ENCODE measurements at regions of chr10 and their contacts with region 1.

Region 1: DNA sequence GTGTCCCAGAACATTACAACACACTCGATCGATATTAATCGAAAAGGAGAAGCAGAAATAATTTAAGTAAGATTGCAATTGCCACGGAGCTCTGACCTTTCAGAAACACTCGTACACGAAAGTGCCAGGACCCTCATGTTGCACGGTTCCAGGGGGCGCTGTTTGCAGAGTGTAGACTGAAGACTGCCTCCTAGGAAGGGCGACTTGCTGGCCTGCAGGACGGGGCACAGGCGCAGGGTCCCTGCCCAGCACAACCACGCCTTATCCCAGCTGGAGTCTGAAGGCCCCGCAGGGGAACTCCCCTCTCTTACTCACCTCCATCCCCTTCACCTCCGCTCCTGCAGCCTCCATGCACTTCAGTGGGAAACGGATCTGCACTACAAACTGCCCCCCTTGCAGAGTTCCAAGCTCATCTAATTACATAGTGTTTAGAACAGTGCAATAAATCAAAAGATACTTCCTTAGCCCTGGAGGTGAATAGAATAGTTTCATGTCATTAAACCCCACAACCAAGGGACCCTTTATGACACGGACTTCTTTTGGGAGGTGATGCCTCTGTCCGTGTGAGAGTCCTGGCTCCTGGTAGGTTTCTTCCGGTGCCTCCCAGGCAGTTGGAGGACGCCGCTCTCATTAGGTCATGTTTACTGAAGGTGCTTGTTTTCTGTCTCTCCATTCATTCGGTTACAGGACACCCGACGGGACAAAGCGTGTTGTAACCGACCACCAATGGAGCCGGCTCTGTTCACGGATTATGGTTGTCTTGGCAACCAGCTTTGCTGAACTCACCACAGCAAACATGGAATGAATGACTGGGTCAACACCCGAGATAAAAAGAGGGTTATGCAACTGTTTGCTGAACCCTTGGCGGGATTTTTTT is 262.2 kb downstream of the BAMBI start:
- DNase-seq: peak; percentile 92 to 100
- ATAC-seq: peak; percentile 94 to 96
- H3K4me3 ChIP-seq: peak overlapping the region; percentile 35
- H3K27ac ChIP-seq: peak overlapping the region; percentile 85
- H3K4me1 ChIP-seq: peaks cover 35% of the 10 kb centered on the region
- CTCF ChIP-seq: peak; percentile 89
- EP300 ChIP-seq: peak; percentile 95 to 97
- POLR2A ChIP-seq: no peak
- RAD21 ChIP-seq: peak; percentile 64 to 68

Region 2: GRCh38 chr10:28676968-28677887 is 262.3 kb before region 1 on chr10 and contains the start of gene BAMBI:
- CTCF ChIA-PET with region 1: interaction called, 13 read pairs
- POLR2A ChIA-PET with region 1: interaction called, 7 read pairs
- DNase-seq: peak; percentile 49 to 90
- ATAC-seq: peak; percentile 94 to 97
- H3K4me3 ChIP-seq: peak within 1 kb of the TSS; percentile 99
- H3K27ac ChIP-seq: peak within 1 kb of the TSS; percentile 94
- H3K4me1 ChIP-seq: peaks cover 27% of the 10 kb centered on the region
- CTCF ChIP-seq: peak; percentile 87
- EP300 ChIP-seq: no peak
- POLR2A ChIP-seq: peak; percentile 99
- RAD21 ChIP-seq: peak; percentile 57 to 95
- polyA plus RNA-seq, gene BAMBI: 40.5 and 60.8 TPM in 2 replicates

Region 3: GRCh38 chr10:28839600-28840007 is 99.9 kb before region 1 on chr10:
- CTCF ChIA-PET with region 1: interaction called, 15 read pairs
- POLR2A ChIA-PET with region 1: no interaction called
- DNase-seq: peak in 1 of 2 experiments; percentile 69
- ATAC-seq: peak in 1 of 2 experiments; percentile 51; a peak in 3 of 6 replicates
- H3K4me3 ChIP-seq: no peak overlapping the region
- H3K27ac ChIP-seq: peak overlapping the region; percentile 36 to 55; a peak in 5 of 6 replicates
- H3K4me1 ChIP-seq: peaks cover 47% of the 10 kb centered on the region
- CTCF ChIP-seq: no peak
- EP300 ChIP-seq: no peak
- POLR2A ChIP-seq: no peak
- RAD21 ChIP-seq: no peak

Region 4: GRCh38 chr10:28925121-28925698 is 14.3 kb before region 1 on chr10:
- CTCF ChIA-PET with region 1: interaction called, 23 read pairs
- POLR2A ChIA-PET with region 1: interaction called, 5 read pairs
- DNase-seq: no peak
- ATAC-seq: no peak
- H3K4me3 ChIP-seq: no peak overlapping the region
- H3K27ac ChIP-seq: peak overlapping the region in 1 of 2 experiments; percentile 45; a peak in 2 of 6 replicates
- H3K4me1 ChIP-seq: peaks cover 20% of the 10 kb centered on the region
- CTCF ChIP-seq: no peak
- EP300 ChIP-seq: no peak
- POLR2A ChIP-seq: no peak
- RAD21 ChIP-seq: no peak

Region 5: GRCh38 chr10:28975891-28976531 is 36.5 kb after region 1 on chr10:
- CTCF ChIA-PET with region 1: interaction called, 10 read pairs
- POLR2A ChIA-PET with region 1: no interaction called
- DNase-seq: no peak
- ATAC-seq: no peak
- H3K4me3 ChIP-seq: no peak overlapping the region
- H3K27ac ChIP-seq: no peak overlapping the region
- H3K4me1 ChIP-seq: no peaks in the 10 kb centered on the region
- CTCF ChIP-seq: no peak
- EP300 ChIP-seq: no peak
- POLR2A ChIP-seq: no peak
- RAD21 ChIP-seq: no peak

Region 6: DNA sequence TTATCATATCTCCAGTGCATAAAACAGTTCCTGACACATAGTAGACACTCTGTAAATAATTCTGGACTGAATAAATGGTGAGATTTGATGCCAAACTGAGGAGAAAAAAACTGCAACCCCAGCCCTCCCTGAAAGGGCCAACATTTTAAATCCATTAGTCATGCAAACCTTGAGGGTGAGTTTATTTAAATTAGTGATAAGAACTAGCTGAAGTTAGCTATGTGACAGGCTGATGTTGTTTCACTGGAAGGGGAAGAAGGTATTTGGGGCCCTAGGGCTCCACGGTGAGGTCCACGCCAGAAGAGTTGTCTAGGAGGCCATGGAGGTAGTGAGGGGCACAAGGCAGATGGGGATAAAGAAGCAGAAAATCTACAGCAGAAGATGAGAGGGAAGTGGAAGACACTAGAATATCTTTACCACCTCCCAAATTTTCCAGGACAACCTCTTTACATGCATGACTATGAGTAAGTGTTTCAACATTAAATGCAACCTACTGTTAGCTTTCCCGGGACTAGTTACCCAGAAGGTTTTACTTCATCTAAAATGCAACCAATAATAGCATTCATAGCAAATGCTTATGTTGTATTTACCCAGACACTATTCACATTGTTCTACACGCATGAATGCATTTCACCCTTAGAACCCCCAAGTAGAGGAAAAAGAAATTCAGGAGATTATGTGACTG is 166.2 kb after region 1 on chr10:
- CTCF ChIA-PET with region 1: interaction called, 22 read pairs
- POLR2A ChIA-PET with region 1: interaction called, 6 read pairs
- DNase-seq: peak; percentile 52 to 81
- ATAC-seq: peak; percentile 78 to 79
- H3K4me3 ChIP-seq: 0 out of 3 replicates have a peak overlapping the region, but pooled peaks have one; percentile 9
- H3K27ac ChIP-seq: peak overlapping the region; percentile 81 to 83
- H3K4me1 ChIP-seq: peaks cover 33% of the 10 kb centered on the region
- CTCF ChIP-seq: no peak
- EP300 ChIP-seq: no peak
- POLR2A ChIP-seq: no peak
- RAD21 ChIP-seq: peak in 1 of 2 experiments; percentile 8; a peak in 1 of 5 replicates

Region 7: DNA sequence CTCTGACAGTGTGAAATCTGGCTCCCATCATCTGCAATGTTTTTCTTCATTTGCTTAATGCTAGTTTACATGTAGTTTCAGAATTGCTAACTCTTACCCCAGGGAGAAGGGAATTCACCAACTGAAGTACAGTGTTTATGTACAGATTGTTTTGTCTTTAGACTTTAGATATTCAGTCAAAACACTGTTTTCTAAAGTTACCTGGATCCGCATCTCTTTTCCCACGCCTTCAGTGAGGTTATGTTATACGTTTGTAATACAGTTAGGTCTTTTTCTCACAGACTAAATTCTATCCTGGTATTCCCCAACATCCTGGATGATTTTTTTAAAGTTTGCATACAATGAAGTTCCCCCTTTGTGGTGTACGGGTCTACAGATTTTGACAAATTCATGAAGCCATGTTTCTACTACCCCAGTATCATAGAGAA is 346.1 kb after region 1 on chr10:
- CTCF ChIA-PET with region 1: no interaction called
- POLR2A ChIA-PET with region 1: no interaction called
- DNase-seq: no peak
- ATAC-seq: no peak
- H3K4me3 ChIP-seq: no peak overlapping the region
- H3K27ac ChIP-seq: no peak overlapping the region
- H3K4me1 ChIP-seq: no peaks in the 10 kb centered on the region
- CTCF ChIP-seq: no peak
- EP300 ChIP-seq: no peak
- POLR2A ChIP-seq: no peak
- RAD21 ChIP-seq: no peak

Measured in A549 (cell line).